Psoas muscle (tissue), 8 donors: ENCODE measurements at regions of chr17 and their contacts with region 1.

Region 1: DNA sequence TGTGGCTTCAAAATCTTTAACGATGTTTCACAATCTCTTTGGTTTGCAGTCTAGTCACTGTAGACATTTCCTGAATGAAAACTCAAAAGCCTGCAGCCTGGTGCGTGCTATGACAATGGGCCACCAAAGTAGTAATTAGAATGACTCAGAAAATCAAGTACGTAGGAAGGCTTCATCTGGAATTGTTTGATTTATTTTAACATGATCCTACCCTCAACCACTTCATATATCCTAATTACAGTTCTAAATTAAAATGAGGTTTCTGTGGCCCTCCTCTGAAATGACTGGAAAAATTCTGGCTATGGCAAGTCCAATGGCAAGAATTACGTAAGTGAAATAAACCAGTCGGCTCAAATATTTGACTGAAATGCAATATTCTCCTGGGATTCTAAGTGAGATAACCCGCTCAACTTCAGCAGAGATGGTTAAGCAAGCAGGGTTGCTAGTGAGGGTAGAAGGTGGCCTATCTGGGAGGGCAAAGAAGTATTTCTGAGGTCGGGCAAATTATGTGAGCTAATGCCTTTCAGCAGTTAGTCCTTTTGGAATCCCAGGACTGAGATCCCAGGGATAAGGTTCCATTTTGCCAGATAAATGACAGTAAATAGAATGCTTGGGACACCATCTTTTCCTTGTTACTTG is 145.6 kb upstream of the MYOCD start:
- DNase-seq: no peak
- ATAC-seq: no peak
- H3K4me3 ChIP-seq: no peak overlapping the region
- H3K27ac ChIP-seq: no peak overlapping the region
- H3K4me1 ChIP-seq: no peaks in the 10 kb centered on the region
- H3K27me3 ChIP-seq: no peaks in the 10 kb centered on the region
- CTCF ChIP-seq: no peak

Region 2: GRCh38 chr17:12667299-12667958 is 147.4 kb after region 1 on chr17:
- intact Hi-C with region 1: loop called in 1 of 2 experiments (anchors 10 kb)
- DNase-seq: no peak
- ATAC-seq: no peak
- H3K4me3 ChIP-seq: peak overlapping the region; percentile 61
- H3K27ac ChIP-seq: no peak overlapping the region
- H3K4me1 ChIP-seq: no peaks in the 10 kb centered on the region
- H3K27me3 ChIP-seq: peaks cover 0 to 29% (median 7%) of the 10 kb centered on the region in 3 donors
- CTCF ChIP-seq: peak; percentile 25